Dendritic cell treated with granulocyte-macrophage colony-stimulating factor and Interleukin-4, amounts not matched to agents 40 ng/mL and 50 ng/mL, for 4 days (primary cell): ENCODE measurements at regions of chr11 and their contacts with region 1.

Region 1: DNA sequence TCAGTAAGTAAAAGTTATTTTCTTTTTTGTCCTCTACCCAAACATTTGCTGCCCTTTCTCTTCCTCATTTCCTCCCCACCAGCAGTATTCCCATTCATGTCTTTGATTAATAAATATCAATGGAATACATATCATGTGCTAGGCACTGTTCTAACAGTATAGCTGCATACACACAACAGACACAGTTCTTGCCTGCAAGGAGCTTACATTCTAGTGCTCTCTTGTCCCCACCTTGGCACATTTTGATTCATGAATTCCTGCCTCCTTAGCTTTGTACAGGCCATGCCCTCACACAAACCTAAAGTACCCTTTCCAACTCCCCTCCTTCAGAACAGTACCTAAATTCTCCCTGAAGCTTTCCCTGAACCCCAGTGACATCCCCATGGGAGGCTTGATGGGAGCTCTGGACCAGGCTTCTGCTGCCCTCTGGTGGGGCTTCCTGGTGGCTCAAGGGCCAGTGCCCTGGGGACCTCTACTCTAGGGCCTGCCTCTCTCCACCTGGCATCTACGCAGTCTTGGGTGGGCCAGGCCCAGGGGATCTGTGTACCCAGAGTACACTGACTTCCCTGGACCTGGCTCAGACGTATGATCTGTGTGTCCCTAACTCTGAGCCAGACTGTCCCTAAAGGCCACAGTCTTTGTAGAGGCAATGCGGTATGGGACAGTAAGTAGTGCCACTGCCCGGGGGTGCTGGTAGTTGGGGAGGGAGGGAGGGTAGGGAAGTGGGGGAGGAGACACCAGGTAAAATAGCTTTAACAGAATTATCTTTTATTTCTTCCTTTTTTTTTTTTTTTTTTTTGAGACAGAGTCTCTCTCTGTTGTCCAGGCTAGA is 14.1 kb downstream of the RPS13 start:
- H3K4me3 Mint-ChIP-seq: no peak overlapping the region
- H3K27ac Mint-ChIP-seq: no peak overlapping the region
- H3K4me1 Mint-ChIP-seq: no peaks in the 10 kb centered on the region
- H3K27me3 Mint-ChIP-seq: no peaks in the 10 kb centered on the region

Region 2: GRCh38 chr11:16785520-16786128 is 277.8 kb before region 1 on chr11:
- intact Hi-C with region 1: loop called (anchors 1 kb)
- H3K4me3 Mint-ChIP-seq: no peak overlapping the region
- H3K27ac Mint-ChIP-seq: no peak overlapping the region
- H3K4me1 Mint-ChIP-seq: peaks cover 54% of the 10 kb centered on the region
- H3K27me3 Mint-ChIP-seq: no peaks in the 10 kb centered on the region

Region 3: GRCh38 chr11:16945671-16946469 is 117.5 kb before region 1 on chr11:
- intact Hi-C with region 1: loop called (anchors 5 kb)
- H3K4me3 Mint-ChIP-seq: no peak overlapping the region
- H3K27ac Mint-ChIP-seq: no peak overlapping the region
- H3K4me1 Mint-ChIP-seq: no peaks in the 10 kb centered on the region
- H3K27me3 Mint-ChIP-seq: no peaks in the 10 kb centered on the region

Region 4: DNA sequence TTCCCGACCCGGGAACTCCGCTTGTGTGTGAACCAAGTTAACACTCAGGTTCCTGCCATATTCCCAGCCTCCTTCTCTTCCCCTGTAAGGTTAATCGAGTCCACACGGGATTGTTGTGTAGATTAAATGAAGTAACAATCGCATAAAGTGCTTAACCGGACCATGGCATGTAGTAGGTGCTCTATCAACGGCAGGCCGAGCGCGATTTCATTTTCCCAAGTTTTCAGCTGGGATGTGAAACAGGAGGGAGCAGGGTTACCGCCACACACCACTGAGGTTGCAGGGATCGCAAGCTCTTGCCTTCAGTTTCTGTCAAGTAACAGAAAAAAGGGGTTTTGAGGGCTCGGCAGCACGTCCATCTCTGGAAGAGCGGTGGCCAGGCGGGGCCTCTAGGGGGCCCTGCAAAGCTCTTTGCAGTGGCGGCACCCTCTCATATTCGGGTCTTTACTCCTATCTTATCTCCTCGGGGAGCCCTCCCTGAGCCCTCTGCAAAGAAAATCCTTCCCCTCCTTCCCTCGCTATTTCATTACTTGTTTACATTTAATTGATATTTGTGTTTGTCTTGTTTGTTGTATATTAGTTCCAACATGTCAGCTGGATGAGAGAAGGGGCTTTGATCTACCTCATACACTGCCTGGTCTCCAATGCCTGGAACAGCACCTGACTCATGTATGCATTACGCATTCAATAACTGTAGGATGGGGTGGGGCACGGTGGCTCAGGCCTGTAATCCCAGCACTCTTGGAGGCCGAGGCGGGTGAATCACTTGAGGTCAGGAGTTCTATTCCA is 48.4 kb before region 1 on chr11:
- intact Hi-C with region 1: loop called (anchors 10 kb)
- H3K4me3 Mint-ChIP-seq: peak overlapping the region; percentile 70
- H3K27ac Mint-ChIP-seq: no peak overlapping the region
- H3K4me1 Mint-ChIP-seq: peaks cover 12% of the 10 kb centered on the region
- H3K27me3 Mint-ChIP-seq: peaks cover 34% of the 10 kb centered on the region